ENCODE measurements at regions of chr10 and their contacts with region 1.

Region 1: GRCh38 chr10:30182191-30183054 is 123.0 kb upstream of the JCAD start:
- DNase-seq: no peak
- H3K4me3 ChIP-seq: no peak overlapping the region
- H3K27ac ChIP-seq: no peak overlapping the region
- H3K4me1 ChIP-seq: no peaks in the 10 kb centered on the region
- CTCF ChIP-seq: no peak

Region 2: GRCh38 chr10:29409241-29410057 is 773.0 kb before region 1 on chr10:
- CTCF ChIA-PET with region 1: no interaction called
- POLR2A ChIA-PET with region 1: no interaction called
- intact Hi-C with region 1: no loop called
- DNase-seq: no peak
- H3K4me3 ChIP-seq: no peak overlapping the region
- H3K27ac ChIP-seq: no peak overlapping the region
- H3K4me1 ChIP-seq: no peaks in the 10 kb centered on the region
- CTCF ChIP-seq: no peak

Region 3: DNA sequence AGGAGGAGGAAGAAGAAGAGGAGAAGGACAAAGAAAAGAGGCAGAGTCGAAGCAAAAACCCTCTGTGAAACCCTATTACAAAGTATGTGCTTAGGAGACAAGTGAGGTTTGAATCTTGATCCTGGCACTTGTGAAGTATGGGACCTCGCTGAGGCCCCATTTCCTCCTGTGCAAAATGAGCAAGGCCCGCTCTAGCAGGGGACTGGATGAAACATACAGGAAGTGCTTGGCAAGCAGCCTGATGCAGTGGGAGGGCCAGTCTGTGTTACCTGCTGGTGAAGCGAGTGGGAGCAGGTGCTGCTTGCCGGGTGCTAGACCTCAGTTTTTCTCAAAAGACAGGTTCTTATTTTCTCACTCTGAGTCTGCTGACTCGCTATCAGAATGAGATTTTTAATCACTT is 273.5 kb before region 1 on chr10:
- CTCF ChIA-PET with region 1: no interaction called
- POLR2A ChIA-PET with region 1: interaction called, 13 read pairs
- intact Hi-C with region 1: no loop called
- DNase-seq: no peak
- H3K4me3 ChIP-seq: no peak overlapping the region
- H3K27ac ChIP-seq: no peak overlapping the region
- H3K4me1 ChIP-seq: no peaks in the 10 kb centered on the region
- CTCF ChIP-seq: no peak

Region 4: DNA sequence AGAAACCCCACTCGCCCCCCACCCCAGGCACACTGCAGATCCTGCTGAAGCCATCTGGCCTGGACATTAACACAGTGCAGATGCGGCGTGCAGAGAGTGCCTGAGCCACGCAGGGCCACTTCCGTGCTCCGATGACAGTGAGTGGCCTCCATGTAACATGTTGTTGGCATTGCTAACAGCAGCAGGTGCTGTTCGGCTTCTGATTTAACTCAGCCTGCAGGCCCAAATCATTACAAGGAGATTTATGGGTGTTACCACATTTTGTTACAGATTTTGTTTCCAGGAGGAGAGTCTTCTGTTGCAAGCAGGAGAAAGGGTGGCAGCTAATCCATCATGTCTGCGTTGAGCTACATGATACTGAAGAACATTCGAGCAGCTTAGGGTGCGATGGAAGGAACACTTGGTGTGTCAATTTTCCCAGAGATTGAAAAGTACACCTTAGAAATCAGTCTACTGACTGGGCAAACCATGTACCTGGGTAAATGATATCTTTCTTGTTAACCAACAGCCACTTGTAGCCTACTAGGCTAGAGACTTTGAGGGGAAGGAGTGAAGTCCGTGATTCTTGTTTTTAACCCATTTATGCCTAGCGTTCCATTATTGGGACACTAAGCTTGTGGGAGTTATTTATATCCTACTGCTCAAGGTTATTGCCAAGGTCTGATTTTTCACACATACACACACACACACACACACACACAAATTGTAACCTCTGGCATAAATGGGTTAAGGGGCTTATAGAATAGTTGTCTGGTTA is 213.0 kb before region 1 on chr10:
- CTCF ChIA-PET with region 1: no interaction called
- POLR2A ChIA-PET with region 1: no interaction called
- intact Hi-C with region 1: no loop called
- DNase-seq: no peak
- H3K4me3 ChIP-seq: no peak overlapping the region
- H3K27ac ChIP-seq: no peak overlapping the region
- H3K4me1 ChIP-seq: no peaks in the 10 kb centered on the region
- CTCF ChIP-seq: no peak